Activated B cell treated with CpG ODN at 0.5 μM for 24 hours (primary cell): ENCODE measurements at regions of chr15 and their contacts with region 1.

Region 1: DNA sequence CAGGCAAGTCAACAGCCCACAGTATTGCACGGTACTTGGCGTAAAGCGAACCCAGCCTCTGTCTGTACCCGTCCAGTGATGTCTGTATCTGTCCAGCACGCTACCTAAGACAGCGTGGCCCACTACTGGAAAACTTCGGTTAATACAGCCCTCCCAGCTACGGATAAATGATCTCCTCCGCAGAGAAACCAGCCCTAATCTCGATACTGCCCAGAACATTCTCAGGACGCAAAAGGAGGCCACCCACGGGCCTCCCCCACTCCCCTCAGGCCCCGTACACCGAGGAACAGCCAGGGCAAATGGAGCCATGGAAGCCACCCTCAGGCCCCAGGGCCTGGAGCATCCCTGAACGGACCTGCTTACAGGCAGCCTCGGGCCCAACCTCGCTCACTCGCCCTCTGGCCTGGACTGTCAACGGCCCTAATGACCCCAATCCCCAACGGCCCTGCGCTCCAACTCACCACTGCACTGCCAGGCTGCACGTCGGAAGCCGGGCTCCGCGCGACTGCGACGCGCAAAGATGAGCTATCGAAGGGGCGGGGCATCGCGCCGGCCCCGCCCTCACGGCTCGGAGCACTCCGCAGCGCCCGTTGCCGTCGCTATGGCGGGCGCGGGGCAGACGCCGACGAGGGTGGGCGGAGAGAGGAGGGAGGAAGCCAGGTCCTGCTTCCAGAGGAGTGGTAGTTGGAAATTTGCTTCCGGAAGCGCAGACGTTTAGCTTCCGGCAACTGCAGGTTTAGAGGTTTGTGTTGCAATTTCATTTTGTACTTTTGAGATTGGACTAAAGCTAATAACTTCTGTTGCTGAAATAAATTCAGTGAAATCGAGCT is at the start of gene SKIC8:
- DNase-seq: peak; percentile 89
- ATAC-seq: peak; percentile 97
- H3K4me3 Mint-ChIP-seq: peak within 1 kb of the TSS; percentile 98
- H3K27ac Mint-ChIP-seq: peak within 1 kb of the TSS; percentile 87
- H3K4me1 Mint-ChIP-seq: peaks cover 23% of the 10 kb centered on the region
- H3K27me3 Mint-ChIP-seq: no peaks in the 10 kb centered on the region
- CTCF ChIP-seq: no peak
- total RNA-seq, gene SKIC8: 43.2 and 46.0 TPM in 2 replicates

Region 2: GRCh38 chr15:78264304-78265136 is 34.8 kb before region 1 on chr15 and contains the start of gene DNAJA4:
- CTCF ChIA-PET with region 1: no interaction called
- POLR2A ChIA-PET with region 1: interaction called, 16 read pairs
- intact Hi-C with region 1: loop called (anchors 2 kb)
- DNase-seq: peak; percentile 46
- ATAC-seq: peak; percentile 72
- H3K4me3 Mint-ChIP-seq: peak within 1 kb of the TSS; percentile 84
- H3K27ac Mint-ChIP-seq: peak within 1 kb of the TSS; percentile 70
- H3K4me1 Mint-ChIP-seq: peaks cover 13% of the 10 kb centered on the region
- H3K27me3 Mint-ChIP-seq: no peaks in the 10 kb centered on the region
- CTCF ChIP-seq: no peak
- total RNA-seq, gene DNAJA4: 18.8 and 22.3 TPM in 2 replicates

Region 3: GRCh38 chr15:78315686-78316282 is 16.5 kb after region 1 on chr15:
- CTCF ChIA-PET with region 1: no interaction called
- POLR2A ChIA-PET with region 1: no interaction called
- intact Hi-C with region 1: no loop called
- DNase-seq: no peak
- ATAC-seq: no peak
- H3K4me3 Mint-ChIP-seq: no peak overlapping the region
- H3K27ac Mint-ChIP-seq: no peak overlapping the region
- H3K4me1 Mint-ChIP-seq: no peaks in the 10 kb centered on the region
- H3K27me3 Mint-ChIP-seq: peaks cover 2% of the 10 kb centered on the region
- CTCF ChIP-seq: no peak

Region 4: DNA sequence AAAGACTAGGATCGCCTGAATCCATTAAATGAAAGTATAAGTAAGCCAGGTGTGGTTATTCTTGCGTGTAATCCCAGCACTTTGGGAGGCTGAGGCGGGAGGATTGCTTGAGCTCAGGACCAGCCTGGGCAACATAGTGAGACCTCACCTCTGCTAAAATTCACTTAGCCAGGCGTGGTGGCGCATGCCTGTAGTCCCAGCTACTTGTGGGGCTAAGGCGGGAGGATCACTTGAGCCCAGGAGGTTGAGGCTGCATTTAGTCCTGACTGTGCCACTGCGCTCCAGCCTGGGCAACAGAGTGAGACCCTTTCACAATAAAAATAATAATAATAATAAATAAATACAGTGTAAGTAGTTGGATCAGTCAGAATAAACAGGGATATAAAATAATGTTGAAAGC is 182.6 kb after region 1 on chr15:
- CTCF ChIA-PET with region 1: no interaction called
- POLR2A ChIA-PET with region 1: no interaction called
- intact Hi-C with region 1: no loop called
- DNase-seq: no peak
- ATAC-seq: no peak
- H3K4me3 Mint-ChIP-seq: no peak overlapping the region
- H3K27ac Mint-ChIP-seq: no peak overlapping the region
- H3K4me1 Mint-ChIP-seq: no peaks in the 10 kb centered on the region
- H3K27me3 Mint-ChIP-seq: no peaks in the 10 kb centered on the region
- CTCF ChIP-seq: no peak

Region 5: GRCh38 chr15:78730955-78731354 is 431.6 kb after region 1 on chr15:
- CTCF ChIA-PET with region 1: no interaction called
- POLR2A ChIA-PET with region 1: interaction called, 12 read pairs
- intact Hi-C with region 1: no loop called
- DNase-seq: no peak
- ATAC-seq: no peak
- H3K4me3 Mint-ChIP-seq: no peak overlapping the region
- H3K27ac Mint-ChIP-seq: no peak overlapping the region
- H3K4me1 Mint-ChIP-seq: no peaks in the 10 kb centered on the region
- H3K27me3 Mint-ChIP-seq: peaks cover 20% of the 10 kb centered on the region
- CTCF ChIP-seq: no peak

Region 6: GRCh38 chr15:78778422-78778821 is 479.1 kb after region 1 on chr15:
- CTCF ChIA-PET with region 1: no interaction called
- POLR2A ChIA-PET with region 1: no interaction called
- intact Hi-C with region 1: no loop called
- DNase-seq: no peak
- ATAC-seq: no peak
- H3K4me3 Mint-ChIP-seq: no peak overlapping the region
- H3K27ac Mint-ChIP-seq: no peak overlapping the region
- H3K4me1 Mint-ChIP-seq: no peaks in the 10 kb centered on the region
- H3K27me3 Mint-ChIP-seq: no peaks in the 10 kb centered on the region
- CTCF ChIP-seq: no peak